Ascending aorta (tissue), 2 donors: ENCODE measurements at regions of chr16 and their contacts with region 1.

Region 1: DNA sequence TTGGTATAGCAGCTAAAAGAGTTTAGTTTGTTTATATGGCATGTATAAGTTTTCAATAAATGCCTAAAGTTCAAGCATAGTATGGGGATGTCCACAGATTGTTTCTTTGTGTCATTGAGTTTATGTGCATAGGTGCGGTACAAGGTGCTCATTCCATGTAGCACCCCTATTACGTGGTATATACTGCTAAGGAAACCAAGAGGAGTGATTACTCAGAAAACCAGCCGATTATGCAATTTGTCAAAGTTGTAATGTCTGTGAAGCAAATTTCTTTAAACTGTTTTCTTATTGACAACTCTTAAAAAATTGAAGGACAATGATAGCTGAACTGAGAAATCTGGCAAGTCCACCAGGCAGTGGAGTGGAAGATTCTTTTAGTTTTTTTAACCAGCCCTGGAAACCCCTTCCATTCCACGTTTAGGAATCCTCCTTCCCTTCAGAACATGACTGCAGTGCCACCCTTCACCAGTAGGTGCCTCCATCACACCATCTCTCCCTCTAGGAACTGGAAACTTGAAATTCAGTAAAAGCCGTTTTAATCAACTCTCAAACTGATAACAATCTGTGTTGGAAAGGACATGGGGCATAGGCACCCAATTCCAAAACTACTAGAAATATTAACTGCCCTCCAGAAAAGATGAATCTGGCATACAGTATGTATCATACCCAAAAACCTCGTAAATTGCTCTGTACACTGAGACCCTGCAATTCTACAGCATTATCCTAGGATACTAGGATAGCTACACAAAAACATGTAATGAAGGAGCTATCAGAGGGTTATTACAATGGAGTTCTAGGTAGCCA is 43.5 kb downstream of the REXO5 start:
- DNase-seq: peak in 1 of 2 donors; percentile 88
- H3K4me3 ChIP-seq: no peak overlapping the region
- H3K27ac ChIP-seq: peak overlapping the region; percentile 86 to 89
- H3K4me1 ChIP-seq: peaks cover 8 to 48% of the 10 kb centered on the region in 2 donors
- H3K27me3 ChIP-seq: no peaks in the 10 kb centered on the region
- CTCF ChIP-seq: peak; percentile 92 to 99 (median 96)

Region 2: DNA sequence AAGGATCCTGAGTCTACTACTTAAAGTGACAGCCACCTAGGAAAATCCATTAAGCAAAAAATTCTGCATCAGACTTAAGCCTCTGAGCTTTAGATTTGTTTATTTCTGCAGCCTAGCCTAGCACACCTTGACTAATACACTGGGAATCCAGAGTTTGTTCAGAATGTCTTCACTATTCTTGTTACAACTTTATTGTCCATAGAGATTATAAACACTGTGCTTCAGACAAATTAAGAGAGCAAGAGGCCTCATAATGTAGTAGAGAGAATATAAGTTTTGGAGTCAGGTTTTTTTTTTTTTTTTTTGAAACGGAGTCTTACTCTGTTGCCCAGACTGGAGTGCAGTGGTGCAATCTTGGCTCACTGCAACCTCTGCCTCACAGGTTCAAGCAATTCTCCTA is 99.2 kb before region 1 on chr16:
- intact Hi-C with region 1: no loop called
- DNase-seq: no peak
- H3K4me3 ChIP-seq: no peak overlapping the region
- H3K27ac ChIP-seq: no peak overlapping the region
- H3K4me1 ChIP-seq: no peaks in the 10 kb centered on the region
- H3K27me3 ChIP-seq: no peaks in the 10 kb centered on the region
- CTCF ChIP-seq: no peak

Region 3: GRCh38 chr16:20866145-20866772 is 16.5 kb after region 1 on chr16:
- intact Hi-C with region 1: loop called (anchors 2 kb)
- DNase-seq: peak; percentile 17 to 86
- H3K4me3 ChIP-seq: peak overlapping the region in 1 of 2 donors; percentile 44
- H3K27ac ChIP-seq: peak overlapping the region; percentile 81 to 82
- H3K4me1 ChIP-seq: peaks cover 38 to 71% of the 10 kb centered on the region in 2 donors
- H3K27me3 ChIP-seq: no peaks in the 10 kb centered on the region
- CTCF ChIP-seq: no peak

Region 4: GRCh38 chr16:20900299-20901067 is 50.7 kb after region 1 on chr16 and contains the starts of genes DCUN1D3 and LYRM1:
- intact Hi-C with region 1: loop called (anchors 1 kb)
- DNase-seq: peak; percentile 92 to 99
- H3K4me3 ChIP-seq: peak within 1 kb of the TSS; percentile 80 to 93
- H3K27ac ChIP-seq: peak within 1 kb of the TSS; percentile 96 to 100
- H3K4me1 ChIP-seq: peaks cover 12 to 56% of the 10 kb centered on the region in 2 donors
- H3K27me3 ChIP-seq: no peaks in the 10 kb centered on the region
- CTCF ChIP-seq: no peak
- total RNA-seq, gene DCUN1D3: 9.8 TPM
- total RNA-seq, gene LYRM1: 3.9 TPM

Region 5: DNA sequence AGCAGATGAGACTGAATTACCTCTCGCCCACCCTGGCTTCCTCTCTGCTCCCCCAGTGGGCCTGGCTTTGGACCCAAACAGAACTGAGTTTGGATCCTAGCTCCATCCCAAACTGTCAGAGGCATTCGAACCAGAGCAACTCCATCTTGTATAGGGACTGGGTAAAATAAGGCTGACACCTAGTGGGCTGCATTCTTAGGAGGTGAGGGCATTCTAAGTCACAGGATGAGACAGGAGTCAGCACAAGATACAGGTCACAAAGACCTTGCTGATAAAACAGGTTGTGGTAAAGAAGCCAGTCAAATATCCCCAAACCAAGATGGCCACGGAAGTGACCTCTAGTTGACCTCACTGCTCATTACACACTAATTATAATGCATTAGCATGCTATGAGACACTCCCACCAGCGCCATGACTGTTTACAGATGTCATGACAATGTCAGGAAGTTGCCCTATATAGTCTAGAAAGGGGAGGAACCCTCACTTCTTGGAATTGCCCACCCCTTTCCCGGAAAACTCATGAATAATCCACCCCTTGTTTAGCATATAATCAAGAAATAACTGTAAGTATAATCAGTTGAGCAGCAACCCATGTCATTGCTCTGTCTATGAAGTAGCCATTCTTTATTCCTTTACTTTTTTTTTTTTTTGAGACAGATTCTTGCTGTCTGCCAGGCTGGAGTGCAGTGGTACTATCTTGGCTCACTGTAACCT is 95.2 kb after region 1 on chr16:
- intact Hi-C with region 1: loop called (anchors 2 kb)
- DNase-seq: no peak
- H3K4me3 ChIP-seq: no peak overlapping the region
- H3K27ac ChIP-seq: no peak overlapping the region
- H3K4me1 ChIP-seq: no peaks in the 10 kb centered on the region
- H3K27me3 ChIP-seq: no peaks in the 10 kb centered on the region
- CTCF ChIP-seq: peak in 1 of 3 experiments; percentile 27

Region 6: DNA sequence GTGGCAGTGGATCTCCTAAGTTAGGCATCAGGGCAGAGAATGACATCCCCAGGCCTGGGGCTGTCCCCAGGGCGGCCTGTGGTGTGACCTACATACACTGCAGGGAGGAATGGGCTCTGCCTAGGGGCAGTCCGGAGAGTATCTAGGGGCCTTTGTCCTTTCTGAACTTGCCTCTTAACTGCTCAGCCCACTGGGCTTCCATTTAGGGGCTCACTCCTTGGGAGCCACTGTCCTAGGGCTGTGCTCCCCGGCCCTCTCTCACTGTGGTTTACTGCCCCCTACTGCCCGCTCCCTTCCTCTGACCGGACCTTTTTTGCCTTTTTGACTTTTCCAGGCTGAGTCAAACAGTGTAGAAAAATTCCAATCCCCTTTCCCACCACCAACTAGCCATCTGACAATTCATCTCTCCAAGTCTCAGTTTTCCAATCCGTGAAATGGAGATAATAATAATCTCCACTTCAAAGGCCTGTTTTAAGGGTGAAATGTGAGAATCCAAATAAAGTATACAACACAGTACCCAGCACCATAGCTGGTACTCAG is 234.0 kb after region 1 on chr16:
- intact Hi-C with region 1: loop called (anchors 1 kb)
- DNase-seq: peak in 1 of 2 donors; percentile 68
- H3K4me3 ChIP-seq: no peak overlapping the region
- H3K27ac ChIP-seq: no peak overlapping the region
- H3K4me1 ChIP-seq: peaks cover 0 to 3% of the 10 kb centered on the region in 2 donors
- H3K27me3 ChIP-seq: no peaks in the 10 kb centered on the region
- CTCF ChIP-seq: peak; percentile 60 to 77 (median 62)

Region 7: DNA sequence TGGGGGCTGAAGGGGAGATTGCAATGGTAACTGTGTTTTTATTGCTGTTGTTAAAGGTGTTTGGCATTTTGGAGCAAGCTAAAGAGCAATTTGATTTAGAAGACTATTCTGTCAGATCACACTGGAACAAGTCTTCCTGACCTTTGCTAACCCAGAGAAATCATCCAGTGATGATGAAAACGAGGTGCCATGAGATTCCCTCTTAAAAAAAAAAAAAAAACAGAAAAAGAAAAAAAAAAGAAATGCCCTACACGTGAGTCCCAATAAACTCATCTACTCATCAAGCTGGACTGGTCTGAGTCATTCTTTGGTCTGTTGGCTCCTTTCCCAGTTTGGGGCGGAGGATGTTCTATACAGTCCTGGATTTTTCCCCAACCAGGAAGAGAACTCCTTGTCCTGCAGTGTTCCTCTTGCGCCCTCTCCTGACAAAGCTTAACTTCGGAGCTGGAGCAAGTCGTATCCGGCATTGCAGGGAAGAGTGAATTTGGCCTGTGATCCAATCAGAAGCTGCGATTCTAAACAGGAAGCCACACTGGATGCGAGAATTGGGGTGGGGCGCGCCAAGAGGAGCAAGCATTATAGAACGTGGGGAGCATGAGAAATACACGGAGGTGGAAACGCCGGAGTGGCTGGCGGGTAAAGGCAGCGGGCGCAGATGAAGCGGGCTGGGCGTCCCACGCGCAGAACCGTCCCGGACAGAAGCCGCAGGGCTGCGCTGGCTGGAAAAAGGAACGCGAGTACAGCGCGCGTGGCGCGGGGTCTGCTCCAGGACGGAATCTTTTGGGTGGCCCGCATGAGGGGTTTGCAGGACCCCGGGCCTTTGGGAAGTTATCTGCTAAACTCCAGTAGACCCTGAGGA is 450.7 kb after region 1 on chr16:
- intact Hi-C with region 1: loop called (anchors 2 kb)
- DNase-seq: peak; percentile 92 to 99
- H3K4me3 ChIP-seq: peak overlapping the region; percentile 72 to 79
- H3K27ac ChIP-seq: peak overlapping the region; percentile 82 to 83
- H3K4me1 ChIP-seq: peaks cover 0 to 4% of the 10 kb centered on the region in 2 donors
- H3K27me3 ChIP-seq: no peaks in the 10 kb centered on the region
- CTCF ChIP-seq: peak; percentile 84 to 88 (median 87)